ENCODE measurements at regions of chr2 and their contacts with region 1.

Region 1: DNA sequence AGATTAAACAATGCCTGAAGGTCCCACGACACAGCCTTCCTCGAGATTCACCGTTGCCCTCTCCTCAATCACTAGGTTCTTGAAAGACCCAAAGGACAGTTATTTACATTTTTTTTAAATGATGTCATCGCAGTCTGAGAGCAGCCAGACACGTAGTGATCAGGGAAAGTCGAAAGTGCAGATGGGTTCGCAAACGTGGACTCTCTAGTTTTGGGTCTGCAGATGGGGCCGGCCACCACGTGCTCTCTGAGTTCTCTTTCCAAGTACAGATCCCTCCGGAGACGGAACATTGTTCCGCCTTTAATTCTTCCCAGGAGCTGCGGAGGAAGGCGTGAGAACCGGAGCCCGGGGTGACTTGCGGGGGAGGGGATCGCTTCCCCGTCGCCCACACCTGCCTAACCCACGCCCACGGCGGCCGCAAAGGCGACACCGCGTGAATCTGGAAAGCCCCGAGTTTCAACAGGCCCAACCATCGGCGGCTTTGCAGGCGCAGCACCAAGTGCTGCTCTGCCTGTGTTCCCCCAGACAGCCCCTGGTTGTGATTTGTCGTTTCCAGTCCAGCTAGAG is 54.3 kb downstream of the PKDCC start:
- DNase-seq: peak; percentile 84
- H3K4me3 Mint-ChIP-seq: peak overlapping the region; percentile 67
- H3K27ac Mint-ChIP-seq: peak overlapping the region; percentile 92
- H3K4me1 Mint-ChIP-seq: peaks cover 60% of the 10 kb centered on the region
- H3K27me3 Mint-ChIP-seq: no peaks in the 10 kb centered on the region

Region 2: DNA sequence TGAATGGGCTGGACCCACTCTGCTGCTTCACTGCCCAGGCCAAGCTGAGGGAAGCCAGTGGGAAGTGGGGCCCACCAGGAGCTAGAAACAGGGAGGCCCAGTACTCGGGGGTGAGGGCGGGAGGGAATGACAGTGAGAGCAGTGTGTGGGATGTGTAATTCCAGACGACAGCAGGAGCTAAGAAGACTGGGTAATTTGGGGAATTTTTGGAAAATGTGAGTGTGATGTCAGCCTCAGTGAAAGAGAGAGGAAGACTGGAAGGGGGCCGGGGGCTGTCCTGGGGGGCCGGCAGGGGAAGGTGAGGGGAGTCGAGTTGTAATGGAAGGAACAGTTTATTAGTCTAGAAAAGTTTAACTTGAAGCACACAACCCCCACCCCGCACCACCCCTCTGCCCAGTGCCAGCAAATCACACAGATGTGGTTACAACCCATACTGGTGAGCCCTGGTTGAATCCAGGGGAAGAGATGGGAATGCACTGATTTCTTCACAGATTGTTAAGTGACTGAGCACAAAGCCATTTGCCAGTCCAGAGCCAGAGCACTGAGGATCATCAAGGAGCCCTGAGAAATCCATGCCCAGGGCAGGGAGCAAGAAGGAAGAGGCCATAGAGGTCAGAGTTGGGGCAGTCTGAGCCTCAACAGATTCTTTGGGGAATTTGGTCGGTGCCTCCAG is 131.0 kb before region 1 on chr2:
- intact Hi-C with region 1: no loop called
- DNase-seq: no peak
- H3K4me3 Mint-ChIP-seq: no peak overlapping the region
- H3K27ac Mint-ChIP-seq: no peak overlapping the region
- H3K4me1 Mint-ChIP-seq: no peaks in the 10 kb centered on the region
- H3K27me3 Mint-ChIP-seq: no peaks in the 10 kb centered on the region

Region 3: GRCh38 chr2:42072349-42073118 is 29.6 kb before region 1 on chr2:
- intact Hi-C with region 1: no loop called
- DNase-seq: no peak
- H3K4me3 Mint-ChIP-seq: no peak overlapping the region
- H3K27ac Mint-ChIP-seq: no peak overlapping the region
- H3K4me1 Mint-ChIP-seq: no peaks in the 10 kb centered on the region
- H3K27me3 Mint-ChIP-seq: peaks cover 7% of the 10 kb centered on the region

Region 4: DNA sequence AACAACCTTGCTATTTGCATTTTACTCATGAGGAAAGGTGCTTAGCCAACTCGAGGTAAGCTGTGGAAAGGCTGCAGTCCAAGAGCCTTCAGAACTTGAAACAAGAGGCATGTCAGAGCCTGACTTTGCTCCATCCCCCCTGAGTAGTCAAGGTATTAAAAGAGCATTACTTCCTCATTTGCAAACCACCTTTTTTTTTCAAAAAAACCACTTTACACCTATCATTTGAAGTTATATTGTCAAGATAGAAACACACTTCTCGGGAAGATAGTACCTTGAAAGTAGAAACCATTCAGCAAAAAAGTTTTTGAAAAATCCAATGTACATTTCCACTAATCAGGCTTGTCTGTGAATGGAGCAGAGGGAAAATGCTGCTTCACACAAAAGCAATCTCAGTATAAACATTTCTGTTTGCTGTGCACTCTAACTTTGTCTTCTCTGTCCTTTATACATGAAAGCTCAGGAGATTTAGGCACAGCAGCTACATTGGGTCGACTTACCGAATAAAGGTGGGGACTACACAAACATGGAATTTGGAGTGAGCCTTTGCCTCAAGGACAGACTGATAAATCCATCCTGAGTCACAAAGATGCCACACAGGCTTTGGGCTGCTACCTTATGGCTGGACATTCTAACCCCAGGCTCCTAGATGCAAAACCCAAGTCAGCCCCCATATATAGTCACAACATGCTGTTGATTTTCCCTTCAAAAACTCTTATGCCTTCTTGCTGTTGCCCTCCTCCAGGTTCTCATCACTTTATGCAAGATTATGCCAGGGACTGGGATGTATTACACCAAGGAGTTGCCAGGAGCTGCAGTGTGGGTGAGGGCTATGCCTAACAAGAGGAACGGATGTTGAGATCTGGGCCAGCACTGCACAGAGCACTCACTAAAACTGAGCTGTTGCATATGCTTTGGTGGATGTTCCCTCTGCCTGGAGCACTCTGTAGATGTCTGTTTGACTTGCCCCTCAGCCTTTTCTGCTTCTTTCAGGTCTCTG is 25.6 kb after region 1 on chr2:
- intact Hi-C with region 1: loop called (anchors 1 kb)
- DNase-seq: no peak
- H3K4me3 Mint-ChIP-seq: no peak overlapping the region
- H3K27ac Mint-ChIP-seq: no peak overlapping the region
- H3K4me1 Mint-ChIP-seq: peaks cover 77% of the 10 kb centered on the region
- H3K27me3 Mint-ChIP-seq: no peaks in the 10 kb centered on the region

Region 5: DNA sequence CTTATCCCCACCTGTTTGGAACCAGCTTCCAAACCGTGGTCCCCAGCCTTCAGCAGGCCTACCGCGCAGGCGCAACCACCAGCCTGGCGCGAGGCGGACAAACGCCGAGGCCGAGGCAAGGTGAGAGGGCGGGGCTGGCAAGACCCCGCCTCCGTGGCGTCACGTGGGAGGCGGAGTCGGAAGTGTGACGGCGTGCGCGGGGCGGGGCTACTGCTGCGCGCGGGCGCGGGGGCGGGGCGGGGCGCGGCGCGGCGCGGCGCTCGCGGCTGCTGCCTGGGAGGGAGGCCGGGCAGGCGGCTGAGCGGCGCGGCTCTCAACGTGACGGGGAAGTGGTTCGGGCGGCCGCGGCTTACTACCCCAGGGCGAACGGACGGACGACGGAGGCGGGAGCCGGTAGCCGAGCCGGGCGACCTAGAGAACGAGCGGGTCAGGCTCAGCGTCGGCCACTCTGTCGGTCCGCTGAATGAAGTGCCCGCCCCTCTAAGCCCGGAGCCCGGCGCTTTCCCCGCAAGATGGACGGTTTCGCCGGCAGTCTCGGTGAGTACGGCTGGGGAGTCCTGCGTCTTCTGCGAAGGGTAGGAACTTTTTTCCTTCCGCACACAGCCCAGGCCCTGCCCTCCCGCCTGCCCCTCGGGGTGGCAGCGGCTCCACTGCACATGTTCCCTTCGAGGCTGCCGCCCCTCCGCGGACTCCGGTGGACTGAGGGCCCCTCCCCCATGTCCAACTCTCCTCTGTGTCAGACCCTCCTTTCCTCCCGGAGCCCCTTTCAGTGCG is 67.2 kb after region 1 on chr2 and contains the start of gene EML4:
- intact Hi-C with region 1: loop called (anchors 1 kb)
- DNase-seq: peak; percentile 87
- H3K4me3 Mint-ChIP-seq: no peak within 1 kb of the TSS
- H3K27ac Mint-ChIP-seq: no peak within 1 kb of the TSS
- H3K4me1 Mint-ChIP-seq: peaks cover 17% of the 10 kb centered on the region
- H3K27me3 Mint-ChIP-seq: peaks cover 10% of the 10 kb centered on the region
- total RNA-seq, gene EML4: 43.0 and 45.2 TPM in 2 replicates

Region 6: DNA sequence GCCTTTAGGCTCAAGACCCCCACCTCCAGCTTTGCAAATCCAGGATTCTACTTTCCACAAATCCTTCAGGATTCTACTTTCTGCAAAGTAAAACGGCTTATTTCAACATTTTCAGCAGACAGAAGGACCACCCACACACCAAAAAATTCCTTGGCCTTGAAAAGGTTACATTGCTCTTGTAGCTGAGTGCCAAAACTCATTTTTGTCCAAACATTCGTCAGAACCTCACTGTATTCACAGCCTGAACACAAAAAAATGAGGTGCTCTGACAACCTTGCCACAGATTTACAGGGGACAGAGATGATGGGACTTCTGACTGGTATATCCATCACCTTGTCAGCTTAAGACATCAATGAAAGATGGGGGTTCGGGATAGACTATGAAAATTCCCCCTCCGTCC is 321.9 kb after region 1 on chr2:
- intact Hi-C with region 1: loop called (anchors 1 kb)
- DNase-seq: no peak
- H3K4me3 Mint-ChIP-seq: no peak overlapping the region
- H3K27ac Mint-ChIP-seq: no peak overlapping the region
- H3K4me1 Mint-ChIP-seq: peaks cover 28% of the 10 kb centered on the region
- H3K27me3 Mint-ChIP-seq: peaks cover 1% of the 10 kb centered on the region